ENCODE measurements at regions of chr1 and their contacts with region 1.

Region 1: GRCh38 chr1:241531195-241532161 is 700 bp upstream of the KMO start:
- DNase-seq: no peak
- H3K4me3 ChIP-seq: peak overlapping the region; percentile 32 to 74 (median 58)
- H3K27ac ChIP-seq: peak overlapping the region in 33 of 59 donors; percentile 5 to 73 (median 25)
- H3K27me3 ChIP-seq: no peaks in the 10 kb centered on the region
- CTCF ChIP-seq: peak; percentile 53 to 85 (median 70)

Region 2: DNA sequence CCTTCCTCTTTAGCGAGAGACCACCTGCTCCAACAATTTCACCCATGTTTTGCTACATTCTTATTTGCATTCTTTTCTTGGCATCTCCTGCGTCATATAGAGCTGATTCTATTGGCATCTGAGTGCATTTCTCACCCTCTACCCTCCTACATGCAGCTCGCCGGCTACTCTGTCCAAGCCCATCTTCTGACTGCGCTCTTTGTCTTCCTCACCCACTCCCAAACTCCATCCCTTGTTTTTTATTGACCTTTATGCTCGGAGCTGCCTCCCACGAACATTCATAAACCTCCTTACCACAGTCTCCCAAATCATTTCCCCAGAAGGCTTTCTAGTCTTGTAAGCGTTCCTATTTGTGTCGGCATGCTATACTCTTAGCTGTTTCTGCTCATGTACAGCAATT is 1473.4 kb before region 1 on chr1:
- intact Hi-C with region 1: no loop called
- DNase-seq: no peak
- H3K4me3 ChIP-seq: peak overlapping the region in 5 of 59 donors; percentile 7 to 30 (median 9)
- H3K27ac ChIP-seq: no peak overlapping the region
- H3K27me3 ChIP-seq: no peaks in the 10 kb centered on the region
- CTCF ChIP-seq: no peak

Region 3: GRCh38 chr1:241622669-241623068 is 91.2 kb after region 1 on chr1:
- intact Hi-C with region 1: loop called (anchors 5 kb)
- DNase-seq: no peak
- H3K4me3 ChIP-seq: no peak overlapping the region
- H3K27ac ChIP-seq: peak overlapping the region in 24 of 59 donors; percentile 1 to 62 (median 23)
- H3K27me3 ChIP-seq: no peaks in the 10 kb centered on the region
- CTCF ChIP-seq: no peak

Region 4: GRCh38 chr1:241834733-241835377 is 303.4 kb after region 1 on chr1:
- intact Hi-C with region 1: loop called in 1 of 2 experiments (anchors 5 kb)
- DNase-seq: no peak
- H3K4me3 ChIP-seq: no peak overlapping the region
- H3K27ac ChIP-seq: no peak overlapping the region
- H3K27me3 ChIP-seq: no peaks in the 10 kb centered on the region
- CTCF ChIP-seq: peak in 55 of 56 donors; percentile 42 to 82 (median 71)

Measured in dorsolateral prefrontal cortex (tissue), 120 donors.